Right cardiac atrium (tissue), 5 donors: ENCODE measurements at regions of chr3 and their contacts with region 1.

Region 1: DNA sequence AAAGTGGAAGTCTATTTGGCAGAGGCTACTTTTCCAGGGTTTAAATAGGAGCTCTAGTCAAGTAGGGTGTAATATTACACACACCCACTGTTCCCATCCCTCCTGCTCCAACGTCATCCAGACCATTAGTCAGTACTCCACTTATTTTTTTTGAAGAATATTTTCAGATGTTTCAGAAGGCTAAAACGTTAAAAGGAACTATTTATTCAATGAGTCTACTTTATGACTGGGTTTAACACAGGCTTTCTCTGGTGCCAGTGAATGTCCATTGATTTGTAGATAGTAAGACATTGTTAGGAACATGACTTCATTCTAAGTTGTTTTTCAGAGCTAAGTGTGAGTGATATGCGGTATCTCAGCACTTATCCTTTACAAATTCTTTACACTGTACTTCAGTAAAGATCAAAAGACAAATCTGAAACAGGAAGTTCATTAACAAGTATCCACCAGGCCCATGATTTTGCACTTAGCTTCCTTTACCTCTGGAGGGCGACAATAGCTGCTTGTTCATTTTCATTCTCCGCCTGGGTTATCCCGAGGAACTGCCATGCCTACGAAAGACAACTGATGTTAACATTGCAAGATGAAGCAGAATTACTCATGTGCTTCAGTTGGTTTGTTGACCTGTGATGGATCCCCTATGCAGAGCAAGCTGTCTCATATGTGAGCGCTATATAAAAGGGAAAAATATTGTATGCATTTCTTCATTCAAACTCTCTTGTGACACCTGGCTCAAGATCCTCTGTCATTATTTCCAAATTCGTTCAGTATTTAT is 158.7 kb downstream of the USP13 start:
- DNase-seq: no peak
- ATAC-seq: peak; percentile 45 to 54
- H3K4me3 ChIP-seq: no peak overlapping the region
- H3K27ac ChIP-seq: no peak overlapping the region
- H3K4me1 ChIP-seq: no peaks in the 10 kb centered on the region
- H3K27me3 ChIP-seq: no peaks in the 10 kb centered on the region

Region 2: GRCh38 chr3:180594631-180595558 is 783.4 kb after region 1 on chr3:
- intact Hi-C with region 1: loop called in 1 of 4 experiments (anchors 10 kb)
- DNase-seq: no peak
- ATAC-seq: no peak
- H3K4me3 ChIP-seq: no peak overlapping the region
- H3K27ac ChIP-seq: no peak overlapping the region
- H3K4me1 ChIP-seq: no peaks in the 10 kb centered on the region
- H3K27me3 ChIP-seq: peaks cover 2% of the 10 kb centered on the region